Activated CD4-positive, alpha-beta T cell treated with anti-CD3 and anti-CD28 coated beads for 36 hours (primary cell): ENCODE measurements at regions of chr18 and their contacts with region 1.

Region 1: GRCh38 chr18:11851146-11851805 is at the start of gene CHMP1B:
- DNase-seq: peak; percentile 98
- ATAC-seq: peak; percentile 92
- H3K4me3 Mint-ChIP-seq: peak within 1 kb of the TSS; percentile 91
- H3K27ac Mint-ChIP-seq: peak within 1 kb of the TSS; percentile 99
- H3K4me1 Mint-ChIP-seq: peaks cover 25% of the 10 kb centered on the region
- H3K27me3 Mint-ChIP-seq: no peaks in the 10 kb centered on the region
- total RNA-seq, gene CHMP1B: 20.4 to 20.9 TPM

Region 2: GRCh38 chr18:10525371-10526210 is 1325.7 kb before region 1 on chr18 and contains the start of gene NAPG:
- CTCF ChIA-PET with region 1: no interaction called
- POLR2A ChIA-PET with region 1: no interaction called
- intact Hi-C with region 1: loop called in 1 of 2 experiments (anchors 5 kb)
- DNase-seq: peak; percentile 94
- ATAC-seq: peak; percentile 84
- H3K4me3 Mint-ChIP-seq: peak within 1 kb of the TSS; percentile 92
- H3K27ac Mint-ChIP-seq: peak within 1 kb of the TSS; percentile 96
- H3K4me1 Mint-ChIP-seq: peaks cover 49% of the 10 kb centered on the region
- H3K27me3 Mint-ChIP-seq: peaks cover 4% of the 10 kb centered on the region
- total RNA-seq, gene NAPG: 28.6 to 31.0 TPM

Region 3: DNA sequence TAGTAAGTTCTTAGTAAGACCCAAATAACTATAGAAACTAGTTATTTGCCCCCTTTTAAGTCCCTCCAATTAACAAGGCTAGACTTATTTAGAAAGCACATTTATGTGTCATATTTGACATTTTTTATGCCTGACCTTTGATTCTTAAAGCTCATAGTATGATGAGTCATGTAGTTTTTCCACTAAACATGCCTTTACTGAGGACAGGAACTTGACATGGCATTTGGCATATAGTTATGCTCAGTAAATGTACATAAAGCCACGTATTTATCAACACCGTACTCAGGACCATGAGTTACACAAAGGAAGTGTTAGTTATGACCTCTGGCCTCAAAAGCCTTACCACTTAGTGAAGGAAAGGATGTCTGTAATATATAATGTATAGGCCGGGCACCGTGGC is 83.3 kb before region 1 on chr18:
- CTCF ChIA-PET with region 1: no interaction called
- POLR2A ChIA-PET with region 1: no interaction called
- intact Hi-C with region 1: no loop called
- DNase-seq: no peak
- ATAC-seq: peak; percentile 19
- H3K4me3 Mint-ChIP-seq: no peak overlapping the region
- H3K27ac Mint-ChIP-seq: no peak overlapping the region
- H3K4me1 Mint-ChIP-seq: no peaks in the 10 kb centered on the region
- H3K27me3 Mint-ChIP-seq: peaks cover 3% of the 10 kb centered on the region

Region 4: GRCh38 chr18:11780042-11780441 is 71.2 kb before region 1 on chr18:
- CTCF ChIA-PET with region 1: no interaction called
- POLR2A ChIA-PET with region 1: no interaction called
- intact Hi-C with region 1: no loop called
- DNase-seq: no peak
- ATAC-seq: no peak
- H3K4me3 Mint-ChIP-seq: no peak overlapping the region
- H3K27ac Mint-ChIP-seq: no peak overlapping the region
- H3K4me1 Mint-ChIP-seq: no peaks in the 10 kb centered on the region
- H3K27me3 Mint-ChIP-seq: peaks cover 14% of the 10 kb centered on the region

Region 5: DNA sequence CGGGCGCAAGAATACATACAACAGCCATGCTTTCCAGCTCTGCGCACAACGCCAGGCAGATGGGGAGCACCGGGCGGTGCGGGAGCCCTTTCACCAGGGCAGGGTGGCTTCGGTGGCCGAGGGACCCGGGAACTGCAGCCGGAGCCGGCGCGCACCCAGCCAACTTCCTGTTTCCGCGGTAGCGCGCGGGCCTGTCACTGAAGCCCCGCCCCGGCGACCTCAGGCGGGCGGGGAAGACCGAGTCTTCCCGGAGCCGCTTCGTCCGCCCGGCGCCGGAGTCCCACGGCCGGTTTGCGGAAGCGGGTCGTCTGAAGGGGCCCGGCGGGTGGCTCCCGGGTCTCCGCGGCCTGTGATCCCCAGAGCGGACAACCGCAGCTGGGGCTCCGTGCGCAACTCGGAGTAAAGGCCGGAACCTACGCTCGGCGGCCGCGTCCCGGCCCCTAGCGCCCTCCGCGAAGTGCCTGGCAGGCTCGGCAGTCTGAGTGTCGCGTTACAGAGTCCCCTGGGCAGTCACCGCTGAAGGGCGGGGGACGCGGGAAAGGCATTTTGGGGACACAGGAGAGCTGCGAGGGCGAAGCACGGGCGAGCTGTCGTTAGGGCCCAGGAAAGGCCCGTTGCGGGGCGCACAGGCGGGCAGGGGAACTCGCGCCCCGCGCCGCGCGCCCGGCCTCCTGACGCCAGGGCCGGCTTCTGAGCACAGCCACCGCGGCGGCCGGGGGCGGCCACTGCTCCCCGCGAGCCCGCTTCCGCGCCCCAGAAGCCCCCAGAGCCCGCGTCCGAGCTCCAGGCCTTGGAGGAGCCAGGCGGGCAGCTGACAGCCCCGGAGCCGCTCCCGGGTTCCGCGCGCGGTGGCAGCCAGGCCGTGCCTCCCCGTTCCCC is 57.1 kb after region 1 on chr18 and contains the start of gene MPPE1:
- CTCF ChIA-PET with region 1: no interaction called
- POLR2A ChIA-PET with region 1: no interaction called
- intact Hi-C with region 1: loop called (anchors 1 kb)
- DNase-seq: peak; percentile 93
- ATAC-seq: peak; percentile 93
- H3K4me3 Mint-ChIP-seq: peak within 1 kb of the TSS; percentile 88
- H3K27ac Mint-ChIP-seq: peak within 1 kb of the TSS; percentile 94
- H3K4me1 Mint-ChIP-seq: peaks cover 18% of the 10 kb centered on the region
- H3K27me3 Mint-ChIP-seq: no peaks in the 10 kb centered on the region
- total RNA-seq, gene MPPE1: 22.4 to 29.6 TPM

Region 6: GRCh38 chr18:11947214-11948191 is 96.2 kb after region 1 on chr18:
- CTCF ChIA-PET with region 1: no interaction called
- POLR2A ChIA-PET with region 1: no interaction called
- intact Hi-C with region 1: loop called in 1 of 2 experiments (anchors 1 kb)
- DNase-seq: peak; percentile 81
- ATAC-seq: peak; percentile 96
- H3K4me3 Mint-ChIP-seq: peak overlapping the region; percentile 74
- H3K27ac Mint-ChIP-seq: peak overlapping the region; percentile 88
- H3K4me1 Mint-ChIP-seq: peaks cover 10% of the 10 kb centered on the region
- H3K27me3 Mint-ChIP-seq: no peaks in the 10 kb centered on the region

Region 7: DNA sequence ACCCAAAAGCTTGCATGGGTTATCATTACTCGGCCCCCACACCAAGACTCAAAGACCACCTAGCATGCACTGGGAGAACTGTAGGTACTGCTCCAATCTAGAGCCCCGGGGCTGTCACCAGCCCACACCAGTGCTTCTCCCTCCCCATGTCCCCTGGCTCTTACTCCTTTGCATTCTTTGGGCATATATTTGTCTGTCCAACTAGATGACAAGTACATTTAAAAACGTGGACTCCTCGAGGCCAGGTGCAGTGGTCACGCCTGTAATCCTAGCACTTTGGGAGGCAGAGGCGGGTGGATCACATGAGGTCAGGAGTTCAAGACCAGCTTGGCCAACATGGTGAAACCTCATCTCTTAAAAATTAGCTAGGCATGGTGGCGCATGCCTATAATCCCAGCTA is 517.9 kb after region 1 on chr18:
- CTCF ChIA-PET with region 1: no interaction called
- POLR2A ChIA-PET with region 1: no interaction called
- intact Hi-C with region 1: loop called in 1 of 2 experiments (anchors 2 kb)
- DNase-seq: no peak
- ATAC-seq: no peak
- H3K4me3 Mint-ChIP-seq: no peak overlapping the region
- H3K27ac Mint-ChIP-seq: no peak overlapping the region
- H3K4me1 Mint-ChIP-seq: peaks cover 30% of the 10 kb centered on the region
- H3K27me3 Mint-ChIP-seq: no peaks in the 10 kb centered on the region

Region 8: DNA sequence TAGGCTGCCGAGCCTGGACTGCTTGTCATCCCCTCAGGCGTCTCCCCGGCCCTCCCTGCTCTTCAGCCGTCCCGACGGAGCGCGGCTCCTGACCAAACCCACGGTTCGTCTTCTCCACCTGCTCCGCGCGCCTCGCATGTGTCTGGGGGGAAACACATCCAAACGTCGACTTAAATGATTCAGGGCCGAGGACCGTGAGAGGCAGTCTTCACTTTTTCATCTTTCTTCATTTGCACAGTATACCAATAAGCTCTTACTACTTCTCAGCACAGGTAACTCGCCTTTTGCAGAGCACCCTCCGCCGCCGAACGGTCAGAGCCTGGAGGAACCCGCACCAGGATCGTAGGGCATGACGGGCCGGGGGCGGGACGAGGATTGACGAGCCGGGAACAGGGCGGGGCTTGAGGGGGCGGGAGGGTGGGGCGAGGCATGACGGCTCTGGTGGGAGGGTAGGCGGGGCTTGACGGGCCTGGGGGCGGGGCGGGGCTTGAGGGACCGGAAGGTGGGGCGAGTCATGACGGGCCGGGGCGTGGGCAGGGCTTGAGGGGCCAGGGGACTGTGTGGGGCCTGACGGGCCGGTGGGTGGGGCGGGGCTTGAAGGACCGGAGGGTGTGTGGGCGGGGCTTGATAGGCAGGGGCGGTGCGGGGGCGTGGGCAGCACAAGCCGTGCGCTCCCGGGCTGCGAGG is 1096.2 kb after region 1 on chr18 and contains the start of gene SEH1L:
- CTCF ChIA-PET with region 1: no interaction called
- POLR2A ChIA-PET with region 1: no interaction called
- intact Hi-C with region 1: loop called in 1 of 2 experiments (anchors 2 kb)
- DNase-seq: peak; percentile 100
- ATAC-seq: peak; percentile 86
- H3K4me3 Mint-ChIP-seq: peak within 1 kb of the TSS; percentile 89
- H3K27ac Mint-ChIP-seq: peak within 1 kb of the TSS; percentile 97
- H3K4me1 Mint-ChIP-seq: peaks cover 34% of the 10 kb centered on the region
- H3K27me3 Mint-ChIP-seq: no peaks in the 10 kb centered on the region
- total RNA-seq, gene SEH1L: 100 to 107 TPM